ENCODE measurements at regions of chr17 and their contacts with region 1.

Region 1: GRCh38 chr17:19507775-19508576 is 25.7 kb upstream of the SLC47A1 start:
- DNase-seq: peak; percentile 93 to 95
- H3K4me3 ChIP-seq: peak overlapping the region; percentile 77 to 96
- H3K27ac ChIP-seq: peak overlapping the region; percentile 98
- H3K4me1 ChIP-seq: peaks cover 0 to 5% (median 2%) of the 10 kb centered on the region in 4 donors
- H3K27me3 ChIP-seq: no peaks in the 10 kb centered on the region
- CTCF ChIP-seq: peak in 1 of 2 experiments; percentile 11

Region 2: DNA sequence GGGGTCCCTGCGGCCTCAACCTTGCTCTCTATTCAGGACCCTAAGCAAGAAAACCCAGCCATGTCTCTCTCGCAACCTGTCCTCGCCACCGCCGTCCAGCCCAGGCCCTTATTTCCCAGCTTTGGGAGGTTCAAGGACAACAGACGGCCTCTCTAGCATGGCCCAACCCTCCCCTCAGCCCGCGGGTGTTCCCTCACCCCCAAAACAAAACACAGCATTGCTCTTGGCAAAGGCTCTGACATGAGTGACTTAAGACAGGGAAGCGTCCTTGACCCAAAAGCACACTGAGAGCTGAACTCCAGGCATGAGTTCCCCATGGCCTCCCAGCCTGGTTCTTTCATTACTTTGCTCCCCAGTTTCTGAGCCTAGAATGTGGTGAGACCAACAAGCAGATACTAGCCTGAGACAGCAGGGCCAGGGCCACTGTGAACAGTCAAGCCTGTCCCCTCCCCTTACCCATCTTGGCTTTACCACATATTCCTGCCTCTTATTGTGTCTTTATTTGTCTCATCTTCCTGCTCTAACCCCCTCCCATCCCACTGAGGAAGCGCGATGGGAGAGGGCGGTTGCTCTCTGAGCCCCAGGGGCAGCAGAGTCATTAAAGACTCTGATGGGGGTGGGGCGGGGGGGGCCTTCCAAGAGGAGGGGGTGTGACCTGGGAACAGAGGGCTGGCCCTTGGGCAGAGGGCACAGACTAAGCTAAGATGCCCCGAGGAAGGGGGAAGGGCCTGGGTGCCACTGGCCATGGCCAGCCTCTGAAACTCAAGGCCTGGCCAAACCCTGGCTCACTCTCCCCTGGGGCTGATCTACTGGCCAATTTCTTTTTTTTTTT is 1683.0 kb before region 1 on chr17:
- intact Hi-C with region 1: loop called (anchors 5 kb)
- DNase-seq: peak; percentile 73 to 92
- H3K4me3 ChIP-seq: peak overlapping the region in 1 of 2 donors; percentile 64
- H3K27ac ChIP-seq: peak overlapping the region; percentile 78 to 92
- H3K4me1 ChIP-seq: peaks cover 5 to 80% (median 47%) of the 10 kb centered on the region in 4 donors
- H3K27me3 ChIP-seq: no peaks in the 10 kb centered on the region
- CTCF ChIP-seq: no peak

Region 3: GRCh38 chr17:19377602-19378392 is 130.2 kb before region 1 on chr17:
- intact Hi-C with region 1: loop called (anchors 5 kb)
- DNase-seq: peak; percentile 98 to 100
- H3K4me3 ChIP-seq: peak overlapping the region; percentile 66 to 77
- H3K27ac ChIP-seq: peak overlapping the region; percentile 90 to 98
- H3K4me1 ChIP-seq: peaks cover 0 to 41% (median 29%) of the 10 kb centered on the region in 4 donors
- H3K27me3 ChIP-seq: no peaks in the 10 kb centered on the region
- CTCF ChIP-seq: no peak

Region 4: DNA sequence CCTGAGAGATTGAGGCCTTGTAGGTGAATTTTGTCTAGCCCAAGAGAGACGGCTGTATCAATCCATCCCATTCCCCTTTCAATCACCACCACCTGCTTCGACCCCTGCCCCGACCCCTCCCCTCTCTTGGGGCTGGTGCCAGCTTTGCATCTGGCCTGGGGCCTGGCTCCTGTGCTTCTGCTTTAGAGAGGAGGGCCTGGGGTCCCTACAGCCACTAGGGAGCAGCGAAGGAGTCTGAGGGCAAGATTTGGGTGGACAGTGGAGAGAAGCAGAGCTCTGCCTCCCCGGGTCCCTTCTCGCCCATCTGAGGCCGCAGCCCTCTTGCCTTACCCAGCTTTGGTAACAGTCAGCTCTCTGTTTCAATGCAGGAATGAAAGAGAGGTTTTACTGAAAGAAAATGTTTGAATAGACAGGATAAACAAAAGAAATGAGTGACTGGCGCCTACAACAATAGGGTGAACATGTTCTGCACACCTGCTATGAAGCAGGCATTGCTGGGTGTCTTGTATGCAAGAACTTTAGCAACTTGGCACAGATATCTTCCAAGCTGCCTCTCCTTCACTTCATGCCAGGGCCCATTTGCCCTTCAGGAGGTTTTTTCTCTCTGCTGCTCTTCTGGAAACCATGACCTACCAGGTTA is 83.1 kb after region 1 on chr17:
- intact Hi-C with region 1: no loop called
- DNase-seq: no peak
- H3K4me3 ChIP-seq: no peak overlapping the region
- H3K27ac ChIP-seq: no peak overlapping the region
- H3K4me1 ChIP-seq: no peaks in the 10 kb centered on the region
- H3K27me3 ChIP-seq: no peaks in the 10 kb centered on the region
- CTCF ChIP-seq: no peak

Region 5: DNA sequence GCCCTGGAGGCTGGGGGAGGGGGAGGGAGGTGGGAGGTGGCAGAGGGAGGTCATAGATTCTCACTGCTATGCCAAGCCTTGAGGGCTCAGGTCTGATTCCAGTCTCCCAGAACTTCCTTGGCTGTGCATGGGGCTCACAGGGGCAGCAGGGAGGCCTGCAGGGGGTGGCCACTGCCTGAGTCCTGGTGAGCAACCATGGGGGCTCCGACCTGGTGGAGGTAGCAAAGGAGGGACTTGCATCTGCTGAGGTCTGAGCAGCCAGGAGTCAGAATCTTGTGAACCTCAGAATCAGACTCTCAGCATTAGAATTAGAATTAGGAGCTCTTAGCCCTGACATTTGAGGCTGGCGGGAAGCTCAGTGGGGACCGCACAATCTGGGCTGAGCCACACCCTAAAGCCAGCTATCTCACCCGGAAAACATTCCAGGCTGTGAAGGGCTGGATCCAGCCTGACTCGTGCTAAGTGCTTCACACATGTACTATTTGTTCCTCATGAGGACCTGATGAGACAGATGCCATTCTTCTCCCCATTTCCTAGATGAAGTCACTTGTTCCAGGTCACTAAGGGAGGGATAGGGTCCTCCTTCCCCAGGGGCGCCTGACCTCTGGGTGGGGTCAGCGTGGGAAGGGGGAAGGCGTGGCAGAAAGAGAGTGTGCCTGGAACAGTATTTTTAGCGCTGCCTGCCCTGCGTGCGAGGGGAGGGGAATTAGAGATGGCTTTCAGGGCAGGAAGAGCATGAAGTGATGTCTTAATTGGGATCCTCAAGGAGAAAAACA is 1850.9 kb after region 1 on chr17:
- intact Hi-C with region 1: no loop called
- DNase-seq: no peak
- H3K4me3 ChIP-seq: no peak overlapping the region
- H3K27ac ChIP-seq: no peak overlapping the region
- H3K4me1 ChIP-seq: no peaks in the 10 kb centered on the region
- H3K27me3 ChIP-seq: no peaks in the 10 kb centered on the region
- CTCF ChIP-seq: no peak

Measured in tibial artery (tissue), 4 donors.